CD4-positive, alpha-beta T cell (primary cell): ENCODE measurements at regions of chr1 and their contacts with region 1.

Region 1: GRCh38 chr1:225911191-225912130 is 12.6 kb downstream of the PYCR2 start:
- DNase-seq: peak; percentile 52 to 88 (median 69)
- ATAC-seq: peak; percentile 95
- H3K4me3 ChIP-seq: no peak overlapping the region
- H3K4me3 Mint-ChIP-seq: no peak overlapping the region
- H3K27ac ChIP-seq: no peak overlapping the region
- H3K27ac Mint-ChIP-seq: no peak overlapping the region
- H3K4me1 ChIP-seq: peaks cover 28% of the 10 kb centered on the region
- H3K4me1 Mint-ChIP-seq: peaks cover 42% of the 10 kb centered on the region
- H3K27me3 ChIP-seq: no peaks in the 10 kb centered on the region
- H3K27me3 Mint-ChIP-seq: no peaks in the 10 kb centered on the region
- CTCF ChIP-seq: peak; percentile 97

Region 2: GRCh38 chr1:225378880-225379279 is 532.6 kb before region 1 on chr1:
- CTCF ChIA-PET with region 1: no interaction called
- POLR2A ChIA-PET with region 1: no interaction called
- intact Hi-C with region 1: no loop called
- DNase-seq: no peak
- ATAC-seq: no peak
- H3K4me3 ChIP-seq: no peak overlapping the region
- H3K4me3 Mint-ChIP-seq: no peak overlapping the region
- H3K27ac ChIP-seq: no peak overlapping the region
- H3K27ac Mint-ChIP-seq: no peak overlapping the region
- H3K4me1 ChIP-seq: no peaks in the 10 kb centered on the region
- H3K4me1 Mint-ChIP-seq: peaks cover 4% of the 10 kb centered on the region
- H3K27me3 ChIP-seq: no peaks in the 10 kb centered on the region
- H3K27me3 Mint-ChIP-seq: no peaks in the 10 kb centered on the region
- CTCF ChIP-seq: no peak

Region 3: GRCh38 chr1:225474986-225475820 is 436.3 kb before region 1 on chr1:
- CTCF ChIA-PET with region 1: no interaction called
- POLR2A ChIA-PET with region 1: no interaction called
- intact Hi-C with region 1: loop called (anchors 1 to 2 kb)
- DNase-seq: peak; percentile 27 to 88 (median 60)
- ATAC-seq: peak; percentile 85
- H3K4me3 ChIP-seq: no peak overlapping the region
- H3K4me3 Mint-ChIP-seq: no peak overlapping the region
- H3K27ac ChIP-seq: no peak overlapping the region
- H3K27ac Mint-ChIP-seq: peak overlapping the region; percentile 39
- H3K4me1 ChIP-seq: peaks cover 55% of the 10 kb centered on the region
- H3K4me1 Mint-ChIP-seq: peaks cover 42% of the 10 kb centered on the region
- H3K27me3 ChIP-seq: no peaks in the 10 kb centered on the region
- H3K27me3 Mint-ChIP-seq: no peaks in the 10 kb centered on the region
- CTCF ChIP-seq: peak; percentile 100

Region 4: DNA sequence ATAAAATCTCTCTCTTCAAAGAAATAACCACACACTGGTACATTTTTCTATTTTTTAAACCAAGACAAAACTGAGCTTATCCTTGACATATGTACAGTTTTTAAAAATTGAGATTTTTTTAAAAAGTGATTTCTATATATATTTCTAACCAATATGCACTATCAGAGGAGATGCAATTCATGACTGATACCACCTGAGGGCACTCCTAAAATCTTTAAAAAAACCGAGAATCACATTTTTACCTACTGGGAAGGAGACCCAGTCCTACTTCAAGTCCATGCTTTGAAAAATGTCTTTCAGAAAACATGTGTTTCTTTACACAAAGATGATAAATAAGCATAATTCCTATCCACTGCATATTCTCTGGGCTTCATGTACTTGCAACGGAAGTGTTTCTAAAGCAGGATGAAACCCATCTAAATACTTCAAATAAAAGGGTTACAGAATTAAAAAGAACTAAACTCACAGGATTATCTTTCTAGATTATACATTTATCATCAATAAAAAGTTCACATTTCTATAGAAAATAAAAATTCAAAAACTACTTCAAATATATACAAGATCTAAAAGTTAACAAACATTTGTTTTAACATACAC is 357.1 kb before region 1 on chr1:
- CTCF ChIA-PET with region 1: no interaction called
- POLR2A ChIA-PET with region 1: no interaction called
- intact Hi-C with region 1: loop called (anchors 2 to 5 kb)
- DNase-seq: peak in 3 of 14 experiments; percentile 30 to 44 (median 34)
- ATAC-seq: no peak
- H3K4me3 ChIP-seq: no peak overlapping the region
- H3K4me3 Mint-ChIP-seq: no peak overlapping the region
- H3K27ac ChIP-seq: no peak overlapping the region
- H3K27ac Mint-ChIP-seq: no peak overlapping the region
- H3K4me1 ChIP-seq: no peaks in the 10 kb centered on the region
- H3K4me1 Mint-ChIP-seq: no peaks in the 10 kb centered on the region
- H3K27me3 ChIP-seq: peaks cover 0 to under 1% of the 10 kb centered on the region in 2 experiments
- H3K27me3 Mint-ChIP-seq: peaks cover 4% of the 10 kb centered on the region
- CTCF ChIP-seq: peak; percentile 67

Region 5: DNA sequence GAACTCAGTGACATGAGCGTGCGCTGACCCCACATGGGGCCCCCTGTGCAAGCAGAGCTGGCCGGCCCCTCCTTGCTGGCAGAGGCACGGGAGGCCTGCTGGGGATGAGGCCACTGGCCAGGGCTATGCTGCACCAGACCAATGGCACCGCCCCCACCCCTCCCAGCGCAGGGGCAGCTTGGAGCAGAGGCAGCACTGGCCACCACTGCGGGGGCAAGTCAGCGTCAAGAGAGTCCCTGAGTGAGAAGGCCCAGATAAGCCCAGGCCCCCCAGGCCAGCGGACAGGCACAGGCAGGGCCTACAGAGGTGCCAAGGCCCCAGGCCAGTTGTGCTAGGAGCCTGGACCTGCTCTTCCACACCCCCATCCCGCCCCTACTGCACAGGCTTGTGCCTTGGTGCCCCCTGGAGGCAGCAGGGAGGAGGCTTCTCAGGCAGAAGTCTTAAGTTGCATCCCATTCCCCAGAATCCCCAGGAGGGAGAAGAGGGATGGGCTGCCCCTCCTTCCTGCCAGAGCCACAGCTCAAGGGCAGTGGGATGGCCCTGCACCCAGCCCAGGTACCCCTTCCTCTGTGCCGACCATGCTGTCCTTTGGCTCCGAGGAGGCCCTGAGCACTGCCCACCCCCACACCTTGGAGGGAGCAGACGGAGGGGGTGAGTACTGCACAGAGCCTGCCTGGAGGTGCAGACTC is 65.7 kb before region 1 on chr1:
- CTCF ChIA-PET with region 1: interaction called, 4 read pairs
- POLR2A ChIA-PET with region 1: interaction called, 12 read pairs
- intact Hi-C with region 1: no loop called
- DNase-seq: peak in 8 of 14 experiments; percentile 16 to 66 (median 35)
- ATAC-seq: no peak
- H3K4me3 ChIP-seq: no peak overlapping the region
- H3K4me3 Mint-ChIP-seq: no peak overlapping the region
- H3K27ac ChIP-seq: no peak overlapping the region
- H3K27ac Mint-ChIP-seq: peak overlapping the region; percentile 96
- H3K4me1 ChIP-seq: peaks cover 40% of the 10 kb centered on the region
- H3K4me1 Mint-ChIP-seq: peaks cover 58% of the 10 kb centered on the region
- H3K27me3 ChIP-seq: no peaks in the 10 kb centered on the region
- H3K27me3 Mint-ChIP-seq: no peaks in the 10 kb centered on the region
- CTCF ChIP-seq: peak; percentile 35

Region 6: GRCh38 chr1:225866061-225866837 is 45.2 kb before region 1 on chr1:
- CTCF ChIA-PET with region 1: interaction called, 10 read pairs
- POLR2A ChIA-PET with region 1: interaction called, 6 read pairs
- intact Hi-C with region 1: loop called (anchors 1 to 2 kb)
- DNase-seq: peak; percentile 46 to 87 (median 71)
- ATAC-seq: peak; percentile 93
- H3K4me3 ChIP-seq: peak overlapping the region; percentile 10
- H3K4me3 Mint-ChIP-seq: peak overlapping the region; percentile 56
- H3K27ac ChIP-seq: peak overlapping the region; percentile 51 to 64
- H3K27ac Mint-ChIP-seq: peak overlapping the region; percentile 87
- H3K4me1 ChIP-seq: peaks cover 48% of the 10 kb centered on the region
- H3K4me1 Mint-ChIP-seq: peaks cover 52% of the 10 kb centered on the region
- H3K27me3 ChIP-seq: no peaks in the 10 kb centered on the region
- H3K27me3 Mint-ChIP-seq: no peaks in the 10 kb centered on the region
- CTCF ChIP-seq: no peak

Region 7: DNA sequence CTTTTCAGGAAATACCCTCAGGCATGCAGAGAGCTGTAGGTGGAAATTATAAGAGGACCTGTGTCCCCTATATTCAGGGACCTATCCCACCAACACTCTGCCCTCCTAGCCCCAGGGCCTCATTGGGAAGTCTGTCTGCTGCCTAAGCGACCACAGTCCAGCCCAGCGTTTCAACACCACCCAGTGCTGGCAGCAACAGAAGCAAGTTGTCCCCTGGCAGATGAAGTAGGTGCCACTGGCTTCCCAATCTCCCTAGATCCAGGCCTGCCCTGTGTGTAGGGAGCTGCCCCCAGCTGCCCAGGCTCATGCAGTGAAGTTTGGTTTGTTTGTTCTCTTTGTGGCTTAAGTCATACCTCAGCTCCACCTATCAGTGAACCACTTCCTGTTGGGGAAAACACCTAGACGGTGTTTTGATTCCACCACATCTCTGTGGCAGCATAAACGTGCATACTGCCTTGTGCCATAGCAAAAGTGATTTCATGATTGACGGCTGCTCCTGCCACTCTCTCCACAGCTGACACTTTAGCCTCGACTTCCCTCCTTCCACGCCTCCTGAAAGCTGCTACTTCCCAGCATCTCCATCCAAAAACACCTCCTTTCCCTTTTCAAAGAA is 14.4 kb before region 1 on chr1:
- CTCF ChIA-PET with region 1: interaction called, 11 read pairs
- POLR2A ChIA-PET with region 1: interaction called, 59 read pairs
- intact Hi-C with region 1: no loop called
- DNase-seq: peak; percentile 45 to 95 (median 60)
- ATAC-seq: peak; percentile 92
- H3K4me3 ChIP-seq: peak overlapping the region; percentile 26
- H3K4me3 Mint-ChIP-seq: peak overlapping the region; percentile 55
- H3K27ac ChIP-seq: peak overlapping the region; percentile 81 to 90
- H3K27ac Mint-ChIP-seq: peak overlapping the region; percentile 98
- H3K4me1 ChIP-seq: peaks cover 53% of the 10 kb centered on the region
- H3K4me1 Mint-ChIP-seq: peaks cover 60% of the 10 kb centered on the region
- H3K27me3 ChIP-seq: no peaks in the 10 kb centered on the region
- H3K27me3 Mint-ChIP-seq: no peaks in the 10 kb centered on the region
- CTCF ChIP-seq: no peak

Region 8: GRCh38 chr1:225933072-225933471 is 21.6 kb after region 1 on chr1:
- CTCF ChIA-PET with region 1: no interaction called
- POLR2A ChIA-PET with region 1: no interaction called
- intact Hi-C with region 1: no loop called
- DNase-seq: no peak
- ATAC-seq: no peak
- H3K4me3 ChIP-seq: no peak overlapping the region
- H3K4me3 Mint-ChIP-seq: no peak overlapping the region
- H3K27ac ChIP-seq: no peak overlapping the region
- H3K27ac Mint-ChIP-seq: no peak overlapping the region
- H3K4me1 ChIP-seq: peaks cover 16% of the 10 kb centered on the region
- H3K4me1 Mint-ChIP-seq: peaks cover 15% of the 10 kb centered on the region
- H3K27me3 ChIP-seq: no peaks in the 10 kb centered on the region
- H3K27me3 Mint-ChIP-seq: no peaks in the 10 kb centered on the region
- CTCF ChIP-seq: no peak

Region 9: DNA sequence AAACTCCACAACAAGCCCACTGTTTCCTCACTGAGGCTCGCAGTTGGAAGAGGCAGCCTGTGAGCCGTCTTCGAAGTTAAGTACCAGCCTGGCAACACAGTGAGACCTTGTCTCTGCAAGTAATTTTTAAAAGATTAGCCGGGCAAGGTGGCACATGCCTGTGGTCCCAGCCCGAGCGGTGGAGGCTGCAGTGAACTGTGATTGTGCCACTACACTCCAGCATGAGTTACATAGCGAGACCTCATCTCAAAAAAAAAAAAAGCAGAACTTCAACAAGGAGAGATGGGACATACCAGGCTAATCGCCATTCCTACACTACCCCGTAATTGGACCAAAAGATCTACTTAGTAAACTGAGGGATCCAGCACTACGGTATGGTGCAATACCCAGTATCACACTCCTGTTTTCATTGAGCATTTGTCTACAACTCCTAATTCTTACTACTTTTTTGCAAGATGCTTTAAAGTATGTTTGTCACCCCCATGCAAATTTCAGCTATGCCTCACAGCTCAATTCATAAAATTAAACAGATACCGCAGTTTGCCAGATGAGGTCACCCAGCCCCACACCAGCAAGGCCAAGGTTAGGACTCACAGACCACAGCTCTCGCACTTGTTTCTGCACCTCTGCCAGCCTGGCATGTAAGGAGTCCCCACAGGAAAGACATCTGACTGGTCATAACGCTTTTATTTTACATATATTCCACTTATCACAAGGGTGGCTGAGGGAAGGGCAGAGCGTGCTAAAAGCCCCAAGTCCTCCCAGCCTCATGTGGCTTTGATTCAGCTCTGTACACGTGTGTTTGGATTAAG is 66.7 kb after region 1 on chr1:
- CTCF ChIA-PET with region 1: no interaction called
- POLR2A ChIA-PET with region 1: no interaction called
- intact Hi-C with region 1: loop called in 1 of 2 experiments (anchors 10 kb)
- DNase-seq: peak in 1 of 14 experiments; percentile 7
- ATAC-seq: no peak
- H3K4me3 ChIP-seq: no peak overlapping the region
- H3K4me3 Mint-ChIP-seq: no peak overlapping the region
- H3K27ac ChIP-seq: no peak overlapping the region
- H3K27ac Mint-ChIP-seq: no peak overlapping the region
- H3K4me1 ChIP-seq: peaks cover 5% of the 10 kb centered on the region
- H3K4me1 Mint-ChIP-seq: peaks cover 6% of the 10 kb centered on the region
- H3K27me3 ChIP-seq: no peaks in the 10 kb centered on the region
- H3K27me3 Mint-ChIP-seq: no peaks in the 10 kb centered on the region
- CTCF ChIP-seq: no peak